ENCODE measurements at regions of chr14 and their contacts with region 1.

Region 1: GRCh38 chr14:105375635-105376057 is 22.7 kb upstream of the TEX22 start:
- DNase-seq: no peak
- H3K4me3 ChIP-seq: no peak overlapping the region
- H3K27ac ChIP-seq: no peak overlapping the region
- H3K4me1 ChIP-seq: no peaks in the 10 kb centered on the region; a peak in 1 of 4 replicates
- H3K27me3 ChIP-seq: no peaks in the 10 kb centered on the region
- CTCF ChIP-seq: no peak
- EP300 ChIP-seq: no peak
- RAD21 ChIP-seq: no peak

Region 2: DNA sequence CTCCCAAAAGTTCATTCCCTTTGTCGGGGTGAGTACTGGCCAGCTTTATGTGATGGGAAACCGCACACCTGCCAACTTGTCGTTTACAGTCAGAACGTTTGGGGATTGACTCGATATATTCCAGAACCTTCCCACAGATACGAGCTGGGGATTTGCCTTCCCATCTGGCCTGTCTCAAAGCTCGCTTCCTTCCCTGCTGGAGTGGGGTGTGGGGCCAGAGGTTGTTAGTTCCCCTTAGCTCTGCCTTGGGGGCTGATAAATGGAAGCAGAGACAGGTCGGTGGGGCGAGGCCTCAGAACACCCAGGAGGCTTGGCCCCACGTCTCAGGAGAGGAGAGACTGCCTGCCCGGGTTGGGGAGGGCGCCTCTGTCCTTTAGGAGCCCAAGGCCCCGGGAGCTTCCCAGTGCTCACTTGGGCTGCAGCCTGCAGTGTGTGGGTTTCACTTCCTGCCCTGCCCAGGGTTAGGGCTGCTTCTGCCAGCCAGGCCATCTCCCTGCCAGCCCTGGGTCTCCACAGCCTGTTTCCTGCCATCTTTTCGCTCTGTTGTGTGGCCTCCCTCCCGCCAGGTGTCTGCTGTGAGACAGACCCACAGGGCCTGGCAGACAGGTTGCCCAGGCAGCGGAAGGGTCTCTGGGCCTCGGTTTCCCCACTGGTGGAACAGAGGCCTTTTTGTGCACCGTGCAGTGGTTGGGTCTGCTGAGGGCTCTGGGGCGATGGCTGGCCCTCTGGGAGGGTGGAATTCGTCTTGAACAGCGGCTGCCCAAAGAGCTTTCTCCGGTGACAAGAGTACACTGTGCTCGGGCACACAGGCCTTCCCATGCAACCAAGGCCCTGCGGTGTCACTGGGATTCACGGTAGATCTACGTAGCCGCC is 14.6 kb after region 1 on chr14:
- CTCF ChIA-PET with region 1: interaction called, 21 read pairs
- POLR2A ChIA-PET with region 1: no interaction called
- DNase-seq: no peak
- H3K4me3 ChIP-seq: no peak overlapping the region
- H3K27ac ChIP-seq: peak overlapping the region in 1 of 2 experiments; percentile 16; a peak in 1 of 4 replicates
- H3K4me1 ChIP-seq: peaks cover 0 to 7% of the 10 kb centered on the region in 2 experiments; a peak in 1 of 4 replicates
- H3K27me3 ChIP-seq: no peaks in the 10 kb centered on the region
- CTCF ChIP-seq: no peak
- EP300 ChIP-seq: no peak
- RAD21 ChIP-seq: no peak

Region 3: GRCh38 chr14:105448706-105449111 is 73.1 kb after region 1 on chr14:
- CTCF ChIA-PET with region 1: interaction called, 19 read pairs
- POLR2A ChIA-PET with region 1: no interaction called
- DNase-seq: peak; percentile 96
- H3K4me3 ChIP-seq: peak overlapping the region in 1 of 2 experiments; percentile 32; a peak in 1 of 4 replicates
- H3K27ac ChIP-seq: no peak overlapping the region; a peak in 2 of 4 replicates
- H3K4me1 ChIP-seq: peaks cover 0 to 23% of the 10 kb centered on the region in 2 experiments; a peak in 1 of 4 replicates
- H3K27me3 ChIP-seq: no peaks in the 10 kb centered on the region
- CTCF ChIP-seq: peak; percentile 75
- EP300 ChIP-seq: no peak
- RAD21 ChIP-seq: peak; percentile 69

Region 4: GRCh38 chr14:105527661-105528581 is 152.3 kb after region 1 on chr14:
- CTCF ChIA-PET with region 1: interaction called, 12 read pairs
- POLR2A ChIA-PET with region 1: no interaction called
- DNase-seq: peak; percentile 97
- H3K4me3 ChIP-seq: peak overlapping the region; percentile 64 to 69
- H3K27ac ChIP-seq: peak overlapping the region; percentile 27 to 53; a peak in 2 of 4 replicates
- H3K4me1 ChIP-seq: peaks cover 4 to 17% of the 10 kb centered on the region in 2 experiments; a peak in 2 of 4 replicates
- H3K27me3 ChIP-seq: no peaks in the 10 kb centered on the region
- CTCF ChIP-seq: peak; percentile 68
- EP300 ChIP-seq: no peak
- RAD21 ChIP-seq: peak; percentile 83

Region 5: GRCh38 chr14:105537369-105538164 is 161.9 kb after region 1 on chr14:
- CTCF ChIA-PET with region 1: interaction called, 10 read pairs
- POLR2A ChIA-PET with region 1: no interaction called
- DNase-seq: peak; percentile 95
- H3K4me3 ChIP-seq: no peak overlapping the region; a peak in 1 of 4 replicates
- H3K27ac ChIP-seq: no peak overlapping the region
- H3K4me1 ChIP-seq: no peaks in the 10 kb centered on the region; a peak in 1 of 4 replicates
- H3K27me3 ChIP-seq: peaks cover 5% of the 10 kb centered on the region; the same call in 1 of the 2 replicates
- CTCF ChIP-seq: peak; percentile 83
- EP300 ChIP-seq: no peak
- RAD21 ChIP-seq: peak; percentile 52